Posterior vena cava (tissue), 2 donors: ENCODE measurements at regions of chr16 and their contacts with region 1.

Region 1: GRCh38 chr16:57648590-57649442 is 19.3 kb upstream of the ADGRG3 start:
- DNase-seq: peak; percentile 94

Region 2: GRCh38 chr16:57576429-57576870 is 72.4 kb before region 1 on chr16:
- intact Hi-C with region 1: loop called in 1 of 2 experiments (anchors 5 kb)
- DNase-seq: peak; percentile 91

Region 3: DNA sequence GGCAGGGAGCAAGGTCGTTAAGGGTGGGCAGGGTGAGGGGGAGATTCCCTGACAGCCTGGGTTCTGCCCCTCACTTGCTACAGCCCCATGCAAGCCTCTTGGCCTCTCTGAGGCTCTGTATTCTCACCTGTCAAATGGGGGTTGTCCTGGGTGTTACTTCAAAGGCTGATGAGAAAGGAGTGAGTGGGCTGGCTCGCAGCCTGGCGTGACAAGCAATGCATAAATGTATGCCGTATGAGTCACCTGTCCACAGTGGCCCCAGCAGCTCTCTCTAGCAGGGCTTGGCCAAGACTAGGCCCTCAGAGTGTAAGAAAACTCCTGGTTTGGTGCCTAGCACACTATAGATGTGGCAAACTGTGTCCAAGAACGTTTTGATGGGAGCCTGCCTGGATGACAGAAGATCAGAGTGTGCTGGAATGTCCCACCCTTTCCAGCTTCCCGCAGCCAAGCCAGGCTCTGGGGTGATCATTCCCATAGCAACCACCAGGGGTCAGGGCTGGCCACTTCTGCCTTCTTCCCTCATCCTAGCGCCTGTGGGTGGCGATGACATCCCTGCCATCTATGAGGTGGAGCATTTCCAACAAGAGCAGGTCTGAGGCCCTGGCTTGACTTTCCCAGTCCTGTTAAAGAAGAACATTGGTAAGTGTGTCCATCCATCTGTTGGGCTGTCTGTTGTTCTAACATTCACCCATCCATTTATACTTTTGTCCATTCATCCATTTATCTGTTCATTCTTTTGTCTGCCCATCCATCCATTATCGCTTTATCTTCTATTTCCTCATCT is 57.5 kb before region 1 on chr16:
- intact Hi-C with region 1: loop called in 1 of 2 experiments (anchors 5 kb)
- DNase-seq: peak; percentile 92